MCF 10A (cell line): ENCODE measurements at regions of chr11 and their contacts with region 1.

Region 1: DNA sequence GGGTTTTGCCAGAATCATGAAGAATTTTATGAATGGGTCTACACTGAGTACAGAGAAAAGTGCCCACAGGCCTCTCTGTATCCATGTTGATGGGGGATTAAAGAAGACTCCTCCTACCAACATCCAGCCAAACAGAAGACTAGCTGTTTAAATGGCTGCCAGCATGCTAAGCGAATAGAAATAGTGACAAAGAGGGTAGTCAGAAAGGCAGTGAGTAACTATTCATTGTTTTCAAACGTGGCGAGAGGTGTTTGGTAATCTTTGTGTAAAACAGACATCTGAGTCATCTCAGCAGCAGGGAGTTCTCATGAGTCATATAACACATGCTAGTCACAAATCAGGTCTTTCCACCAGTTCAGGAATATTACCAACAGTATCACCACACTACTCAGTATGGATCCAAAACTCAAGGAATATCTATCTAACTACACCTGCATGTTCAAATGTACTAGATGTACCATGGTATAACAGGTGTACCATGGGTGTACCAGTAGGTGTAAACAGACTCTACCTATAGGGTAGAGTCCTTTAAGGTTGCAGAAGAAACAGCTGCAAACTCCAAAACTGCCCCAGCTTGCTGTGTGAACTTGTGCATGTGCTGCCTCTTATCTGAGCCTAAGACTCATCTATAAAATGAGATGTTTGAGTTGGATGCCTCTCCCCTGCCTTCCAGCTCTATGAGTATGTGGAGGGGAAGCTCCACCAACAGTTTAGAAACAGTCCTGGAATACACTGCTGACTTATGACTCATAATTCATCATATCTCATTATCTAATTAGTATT is 82.0 kb downstream of the SLC1A2 start:
- DNase-seq: peak; percentile 99
- H3K4me3 Mint-ChIP-seq: no peak overlapping the region
- H3K27ac Mint-ChIP-seq: peak overlapping the region; percentile 39
- H3K4me1 Mint-ChIP-seq: peaks cover 23% of the 10 kb centered on the region
- H3K27me3 Mint-ChIP-seq: no peaks in the 10 kb centered on the region
- CTCF ChIP-seq: no peak

Region 2: DNA sequence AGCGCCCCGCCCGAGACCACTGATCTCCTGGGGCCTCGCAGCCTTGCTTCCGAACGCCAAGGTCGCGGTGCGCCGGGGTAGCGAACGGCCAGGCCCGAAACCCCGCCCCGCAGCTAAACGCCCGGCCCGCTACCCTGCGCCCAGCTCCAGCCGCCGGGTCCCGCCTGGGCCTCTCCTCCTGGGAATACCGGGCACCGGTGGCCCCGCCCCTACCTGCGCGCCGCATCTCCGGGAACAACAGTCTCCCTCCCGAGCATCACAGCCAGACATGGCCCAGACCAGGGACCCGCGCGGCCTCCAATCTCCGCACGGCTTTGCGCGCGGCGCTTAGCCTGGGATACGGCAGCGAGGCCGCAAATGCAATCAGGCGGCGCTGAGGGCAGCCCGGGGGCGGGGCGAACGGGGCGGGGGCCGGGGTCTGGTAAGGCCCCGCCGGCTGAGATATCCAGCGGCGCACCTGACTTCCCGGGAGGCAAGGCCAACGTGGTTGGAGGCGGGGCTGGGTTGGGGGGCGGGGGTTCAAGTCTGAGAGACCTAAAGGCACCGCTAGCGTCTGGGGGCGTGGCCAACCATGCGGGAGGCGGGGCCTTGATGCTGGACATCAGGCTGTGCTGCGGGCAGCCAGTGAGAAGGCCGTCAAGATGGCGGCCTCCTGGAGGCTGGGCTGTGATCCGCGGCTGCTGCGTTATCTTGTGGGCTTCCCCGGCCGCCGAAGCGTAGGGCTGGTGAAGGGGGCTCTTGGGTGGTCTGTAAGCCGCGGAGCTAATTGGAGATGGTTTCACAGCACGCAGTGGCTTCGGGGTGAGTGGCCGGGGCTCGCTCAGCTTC is 421.1 kb before region 1 on chr11 and contains the starts of genes APIP and PDHX:
- CTCF ChIA-PET with region 1: no interaction called
- POLR2A ChIA-PET with region 1: interaction called, 11 read pairs
- intact Hi-C with region 1: no loop called
- DNase-seq: peak; percentile 99
- H3K4me3 Mint-ChIP-seq: peak within 1 kb of the TSS; percentile 99
- H3K27ac Mint-ChIP-seq: peak within 1 kb of the TSS; percentile 99
- H3K4me1 Mint-ChIP-seq: peaks cover 19% of the 10 kb centered on the region
- H3K27me3 Mint-ChIP-seq: no peaks in the 10 kb centered on the region
- CTCF ChIP-seq: no peak
- total RNA-seq, gene APIP: 32.4 and 36.9 TPM in 2 replicates
- total RNA-seq, gene PDHX: 35.5 and 35.9 TPM in 2 replicates

Region 3: DNA sequence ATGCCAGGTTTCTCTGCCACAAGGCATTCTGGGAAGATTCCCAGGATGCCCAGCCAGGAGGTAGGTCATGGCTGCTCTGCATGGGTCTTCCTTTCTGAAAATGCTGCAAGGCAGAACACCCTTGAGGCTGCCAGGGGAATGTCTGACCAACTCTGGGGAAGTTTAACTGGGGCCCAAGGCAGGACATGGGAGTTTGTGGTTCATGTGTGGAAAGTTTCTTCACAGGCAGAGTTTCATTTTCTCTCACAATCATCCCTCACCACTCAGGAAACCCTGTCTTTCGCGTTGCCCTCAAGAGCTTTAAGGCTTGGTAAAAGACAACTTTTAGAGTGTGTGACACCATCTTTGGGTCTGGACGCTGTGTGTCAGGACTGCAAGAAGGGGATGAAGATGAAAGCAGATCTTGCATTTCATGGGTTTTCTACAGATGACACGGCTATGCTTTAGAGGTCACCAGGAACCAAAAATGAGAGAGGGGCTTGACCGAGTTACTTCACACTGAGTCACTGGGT is 64.9 kb before region 1 on chr11:
- CTCF ChIA-PET with region 1: interaction called, 3 read pairs
- POLR2A ChIA-PET with region 1: interaction called, 15 read pairs
- intact Hi-C with region 1: no loop called
- DNase-seq: no peak
- H3K4me3 Mint-ChIP-seq: no peak overlapping the region
- H3K27ac Mint-ChIP-seq: no peak overlapping the region
- H3K4me1 Mint-ChIP-seq: peaks cover 29% of the 10 kb centered on the region
- H3K27me3 Mint-ChIP-seq: no peaks in the 10 kb centered on the region
- CTCF ChIP-seq: no peak

Region 4: DNA sequence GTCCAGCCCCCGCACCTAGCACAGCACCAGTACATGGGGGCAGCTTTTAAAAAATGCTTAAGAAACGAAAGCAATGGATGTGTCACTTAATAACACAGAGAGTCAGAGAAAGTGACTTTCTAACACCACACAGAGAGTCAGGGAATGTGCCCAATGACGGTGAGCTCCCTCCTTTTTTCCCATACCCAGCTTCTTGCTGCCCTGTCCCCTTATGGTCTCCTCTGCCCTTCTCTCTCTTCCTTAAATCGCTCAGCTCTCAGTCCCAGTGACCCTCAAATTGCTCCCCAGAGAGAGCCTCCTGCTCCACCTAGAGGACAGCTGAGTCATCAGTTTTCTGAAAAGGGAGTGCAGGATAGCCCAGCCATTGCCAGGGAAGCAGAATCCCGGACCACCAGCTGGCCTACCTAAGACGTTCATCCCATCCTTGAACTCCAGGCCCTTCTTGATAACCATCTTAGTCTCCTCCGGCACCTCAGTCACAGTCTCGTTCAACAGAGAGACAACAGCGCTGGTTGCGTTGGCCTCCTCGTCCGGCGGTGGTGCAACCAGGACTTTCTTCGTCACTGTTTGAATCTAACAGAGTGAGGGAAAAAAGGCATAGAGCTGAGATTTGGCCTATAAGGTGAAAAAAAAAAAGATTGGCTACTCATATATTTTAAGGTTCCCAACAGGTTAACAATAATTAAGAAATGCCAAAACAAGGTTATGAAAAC is 31.5 kb before region 1 on chr11:
- CTCF ChIA-PET with region 1: no interaction called
- POLR2A ChIA-PET with region 1: interaction called, 11 read pairs
- intact Hi-C with region 1: no loop called
- DNase-seq: peak; percentile 61
- H3K4me3 Mint-ChIP-seq: no peak overlapping the region
- H3K27ac Mint-ChIP-seq: no peak overlapping the region
- H3K4me1 Mint-ChIP-seq: peaks cover 38% of the 10 kb centered on the region
- H3K27me3 Mint-ChIP-seq: no peaks in the 10 kb centered on the region
- CTCF ChIP-seq: peak; percentile 18

Region 5: GRCh38 chr11:35324981-35325380 is 12.3 kb before region 1 on chr11:
- CTCF ChIA-PET with region 1: interaction called, 3 read pairs
- POLR2A ChIA-PET with region 1: interaction called, 11 read pairs
- intact Hi-C with region 1: no loop called
- DNase-seq: peak; percentile 26
- H3K4me3 Mint-ChIP-seq: no peak overlapping the region
- H3K27ac Mint-ChIP-seq: no peak overlapping the region
- H3K4me1 Mint-ChIP-seq: peaks cover 16% of the 10 kb centered on the region
- H3K27me3 Mint-ChIP-seq: no peaks in the 10 kb centered on the region
- CTCF ChIP-seq: no peak

Region 6: GRCh38 chr11:35347921-35348331 is 10.6 kb after region 1 on chr11:
- CTCF ChIA-PET with region 1: interaction called, 5 read pairs
- POLR2A ChIA-PET with region 1: interaction called, 81 read pairs
- intact Hi-C with region 1: no loop called
- DNase-seq: no peak
- H3K4me3 Mint-ChIP-seq: no peak overlapping the region
- H3K27ac Mint-ChIP-seq: no peak overlapping the region
- H3K4me1 Mint-ChIP-seq: peaks cover 17% of the 10 kb centered on the region
- H3K27me3 Mint-ChIP-seq: no peaks in the 10 kb centered on the region
- CTCF ChIP-seq: no peak

Region 7: DNA sequence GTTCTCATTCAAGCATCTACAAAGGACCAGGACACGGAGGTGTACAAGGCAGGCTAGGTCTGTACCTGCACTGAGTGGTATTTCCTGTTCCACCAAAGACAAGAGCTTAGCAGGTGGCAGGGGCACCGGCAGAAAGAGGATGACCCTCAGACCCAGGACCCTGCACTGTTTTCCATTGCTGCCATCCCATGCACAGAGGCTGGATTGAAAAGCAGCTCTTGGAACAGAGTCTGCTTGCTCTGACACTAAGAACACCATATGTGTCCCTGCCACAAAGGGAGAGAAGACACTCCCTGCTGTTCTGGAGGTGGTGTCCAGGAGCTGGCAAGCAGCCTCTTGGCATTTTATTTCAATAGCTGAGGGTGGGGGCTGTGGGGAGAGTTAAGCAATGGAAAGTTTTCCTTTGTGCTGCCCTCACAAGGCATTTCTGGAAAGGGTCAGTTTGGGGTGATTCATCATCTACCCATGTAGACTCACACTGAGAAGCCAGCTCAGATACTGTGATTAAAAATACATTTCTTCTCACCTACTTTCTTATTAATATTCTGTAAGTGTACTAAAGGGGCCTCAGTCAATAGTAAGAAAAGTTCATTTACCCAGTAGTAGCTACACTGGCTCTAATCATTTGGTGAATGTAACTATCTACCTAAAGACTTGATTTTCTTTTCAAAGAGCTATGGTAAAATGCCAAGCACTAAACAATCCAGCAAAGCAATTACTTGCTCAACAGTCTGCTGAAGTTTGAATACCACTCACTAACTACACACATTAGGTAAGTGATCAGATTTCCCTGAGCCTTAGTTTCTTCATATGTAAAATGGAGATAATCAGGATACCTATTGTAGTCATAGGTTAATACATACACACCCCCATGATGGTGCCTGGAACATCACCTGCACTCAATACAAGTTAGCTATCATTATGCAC is 26.8 kb after region 1 on chr11:
- CTCF ChIA-PET with region 1: interaction called, 6 read pairs
- POLR2A ChIA-PET with region 1: interaction called, 56 read pairs
- intact Hi-C with region 1: no loop called
- DNase-seq: peak; percentile 97
- H3K4me3 Mint-ChIP-seq: peak overlapping the region; percentile 20
- H3K27ac Mint-ChIP-seq: peak overlapping the region; percentile 64
- H3K4me1 Mint-ChIP-seq: peaks cover 47% of the 10 kb centered on the region
- H3K27me3 Mint-ChIP-seq: no peaks in the 10 kb centered on the region
- CTCF ChIP-seq: no peak